ENCODE measurements at regions of chr13 and their contacts with region 1.

Region 1: GRCh38 chr13:39942552-39943273 is 287.3 kb downstream of the COG6 start:
- DNase-seq: peak; percentile 76
- H3K4me3 Mint-ChIP-seq: no peak overlapping the region
- H3K27ac Mint-ChIP-seq: no peak overlapping the region
- H3K4me1 Mint-ChIP-seq: no peaks in the 10 kb centered on the region
- H3K27me3 Mint-ChIP-seq: peaks cover 15% of the 10 kb centered on the region

Region 2: GRCh38 chr13:39783050-39783449 is 159.7 kb before region 1 on chr13:
- CTCF ChIA-PET with region 1: interaction called, 10 read pairs
- DNase-seq: no peak
- H3K4me3 Mint-ChIP-seq: no peak overlapping the region
- H3K27ac Mint-ChIP-seq: no peak overlapping the region
- H3K4me1 Mint-ChIP-seq: peaks cover 7% of the 10 kb centered on the region
- H3K27me3 Mint-ChIP-seq: peaks cover 6% of the 10 kb centered on the region

Region 3: DNA sequence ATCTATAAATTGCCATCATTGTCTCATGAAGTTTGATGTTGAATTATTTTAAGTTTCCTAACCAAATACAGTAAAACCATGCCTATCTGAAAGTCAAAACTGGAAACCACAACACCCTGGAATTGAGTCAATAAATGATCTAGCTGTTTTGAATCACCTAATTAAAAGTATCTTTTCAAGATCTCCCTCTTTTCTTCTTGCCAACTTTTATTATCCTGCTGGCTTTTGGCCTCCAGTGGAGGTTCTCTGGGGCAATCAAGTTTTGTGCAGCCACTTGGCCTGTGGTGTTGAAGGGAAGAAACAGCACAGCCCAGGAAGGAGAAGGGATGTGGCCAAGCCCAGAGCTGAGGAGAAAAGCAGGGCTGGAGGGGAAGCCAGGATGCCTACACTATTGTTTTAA is 31.9 kb before region 1 on chr13:
- CTCF ChIA-PET with region 1: no interaction called
- DNase-seq: no peak
- H3K4me3 Mint-ChIP-seq: no peak overlapping the region
- H3K27ac Mint-ChIP-seq: no peak overlapping the region
- H3K4me1 Mint-ChIP-seq: no peaks in the 10 kb centered on the region
- H3K27me3 Mint-ChIP-seq: peaks cover 13% of the 10 kb centered on the region

Region 4: DNA sequence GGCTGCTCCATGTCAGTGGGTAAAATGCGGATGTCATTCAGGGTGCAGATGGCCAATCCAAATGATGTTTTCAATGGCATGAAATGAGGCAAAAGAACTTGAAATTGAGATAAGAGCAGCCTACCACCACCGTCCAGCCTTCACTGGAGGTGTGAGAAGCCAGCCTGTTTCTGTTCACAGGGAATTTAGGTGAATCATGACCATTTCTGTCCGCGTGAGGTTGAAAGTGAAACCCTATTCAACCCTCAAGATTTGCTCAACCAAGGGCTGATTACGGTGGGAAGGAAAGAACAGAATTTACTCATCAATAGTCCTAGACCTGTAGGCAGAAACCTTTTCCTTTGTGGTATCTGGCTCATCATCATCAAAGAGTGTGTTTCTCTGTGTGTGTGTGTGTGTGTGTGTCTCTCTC is 83.5 kb after region 1 on chr13:
- CTCF ChIA-PET with region 1: interaction called, 11 read pairs
- DNase-seq: peak; percentile 69
- H3K4me3 Mint-ChIP-seq: no peak overlapping the region
- H3K27ac Mint-ChIP-seq: no peak overlapping the region
- H3K4me1 Mint-ChIP-seq: peaks cover 24% of the 10 kb centered on the region
- H3K27me3 Mint-ChIP-seq: peaks cover 46% of the 10 kb centered on the region

Region 5: DNA sequence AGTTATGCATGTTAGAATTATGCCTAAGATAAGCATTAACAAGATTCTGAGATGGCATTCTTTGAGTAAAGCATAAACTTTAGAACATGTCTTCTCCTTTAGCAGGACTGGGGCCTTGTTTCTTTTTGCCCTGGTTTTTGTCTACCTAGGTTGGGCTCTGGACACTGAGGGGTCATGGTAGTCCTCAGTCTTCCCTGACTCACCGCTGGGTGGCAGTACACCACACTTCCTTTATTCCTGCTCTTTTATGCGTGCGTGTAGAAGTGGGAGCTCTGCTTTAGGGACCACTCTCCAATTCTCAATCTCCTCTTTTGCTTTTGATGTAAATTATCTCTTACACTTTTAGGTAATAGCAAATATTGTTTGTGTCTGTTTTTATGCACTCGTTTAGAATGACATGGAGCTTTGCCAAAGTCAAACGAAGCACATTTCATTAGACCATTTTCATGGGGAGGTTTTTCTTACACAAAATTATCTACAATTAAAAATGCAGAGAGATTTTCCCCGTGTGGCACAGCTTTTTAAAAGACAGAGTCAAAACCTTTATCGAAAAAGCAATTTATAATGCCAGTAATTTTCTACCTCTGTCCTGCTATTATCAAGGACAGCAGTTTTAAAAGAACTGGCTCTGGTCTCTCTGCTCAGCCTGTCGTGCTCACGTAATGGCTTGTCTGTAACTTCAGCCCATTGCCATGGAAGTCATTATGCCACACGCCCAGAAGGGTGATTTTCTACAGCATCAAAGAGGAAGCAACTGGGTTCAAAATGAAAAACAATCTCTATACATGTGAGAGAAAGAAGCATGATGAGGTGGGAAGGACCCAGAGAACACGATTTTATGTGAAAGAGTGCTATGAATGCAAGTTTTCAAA is 126.7 kb after region 1 on chr13:
- CTCF ChIA-PET with region 1: interaction called, 18 read pairs
- DNase-seq: peak; percentile 79
- H3K4me3 Mint-ChIP-seq: no peak overlapping the region
- H3K27ac Mint-ChIP-seq: peak overlapping the region; percentile 1
- H3K4me1 Mint-ChIP-seq: peaks cover 23% of the 10 kb centered on the region
- H3K27me3 Mint-ChIP-seq: no peaks in the 10 kb centered on the region

Measured in activated naive CD4-positive, alpha-beta T cell treated with anti-CD3 and anti-CD28 coated beads, Interleukin-2, amount 10 ng/mL, durations not matched to agents 7 days and 5 days (primary cell).